HCT116 (cell line): ENCODE measurements at regions of chr19 and their contacts with region 1.

Region 1: GRCh38 chr19:45643024-45643926 is 4.1 kb upstream of the EML2 start:
- DNase-seq: peak; percentile 71
- ATAC-seq: no peak
- H3K4me3 ChIP-seq: peak overlapping the region; percentile 53; a peak in 3 of 4 replicates
- H3K27ac ChIP-seq: peak overlapping the region; percentile 79; the same call in 1 of the 2 replicates
- H3K4me1 ChIP-seq: peaks cover 28 to 68% of the 10 kb centered on the region in 2 experiments
- H3K27me3 ChIP-seq: no peaks in the 10 kb centered on the region
- CTCF ChIP-seq: peak; percentile 97 to 99 (median 99)
- POLR2A ChIP-seq: peak; percentile 21
- RAD21 ChIP-seq: peak; percentile 98

Region 2: DNA sequence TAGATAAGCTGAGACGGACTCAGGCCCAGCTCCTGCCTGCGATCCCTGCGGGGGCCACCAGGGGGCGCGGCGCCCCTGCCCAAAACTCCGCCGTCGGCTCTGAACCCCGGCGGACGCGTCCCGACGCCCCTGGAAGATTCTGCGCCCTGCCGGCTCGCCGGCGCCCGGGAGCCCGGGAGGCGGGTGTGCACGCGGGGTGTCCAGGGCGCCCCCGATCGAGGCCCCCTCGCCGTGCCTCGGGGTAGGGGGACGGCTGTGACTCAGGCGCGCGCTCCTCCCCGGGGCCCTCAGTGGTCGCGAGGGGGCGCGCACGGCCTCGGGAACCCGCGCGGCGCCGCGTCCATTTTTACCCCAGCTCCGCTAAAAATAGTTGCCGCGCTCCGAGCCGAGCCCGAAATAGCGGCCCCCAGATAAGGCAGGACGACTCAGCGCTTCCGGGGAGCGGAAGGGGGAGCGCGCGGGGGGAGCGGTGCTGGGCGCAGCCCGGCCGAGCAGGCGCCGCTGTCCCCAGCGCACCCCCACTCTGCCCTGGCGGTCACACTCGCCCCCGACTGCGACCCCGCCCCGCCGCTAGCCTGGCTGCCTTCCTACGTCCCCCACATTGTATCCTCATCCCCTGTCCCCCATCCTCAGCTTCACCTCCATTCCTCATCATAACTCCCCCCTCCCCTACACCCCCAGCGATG is 203.6 kb before region 1 on chr19:
- CTCF ChIA-PET with region 1: interaction called, 10 read pairs
- POLR2A ChIA-PET with region 1: interaction called, 4 read pairs
- RAD21 ChIA-PET with region 1: interaction called in 1 of 2 experiments, 5 read pairs
- intact Hi-C with region 1: no loop called
- DNase-seq: no peak
- ATAC-seq: peak; percentile 48
- H3K4me3 ChIP-seq: peak overlapping the region; percentile 34 to 63
- H3K27ac ChIP-seq: peak overlapping the region; percentile 81
- H3K4me1 ChIP-seq: peaks cover 23 to 44% of the 10 kb centered on the region in 2 experiments
- H3K27me3 ChIP-seq: no peaks in the 10 kb centered on the region
- CTCF ChIP-seq: peak; percentile 88 to 98 (median 96)
- POLR2A ChIP-seq: no peak
- RAD21 ChIP-seq: peak; percentile 87

Region 3: DNA sequence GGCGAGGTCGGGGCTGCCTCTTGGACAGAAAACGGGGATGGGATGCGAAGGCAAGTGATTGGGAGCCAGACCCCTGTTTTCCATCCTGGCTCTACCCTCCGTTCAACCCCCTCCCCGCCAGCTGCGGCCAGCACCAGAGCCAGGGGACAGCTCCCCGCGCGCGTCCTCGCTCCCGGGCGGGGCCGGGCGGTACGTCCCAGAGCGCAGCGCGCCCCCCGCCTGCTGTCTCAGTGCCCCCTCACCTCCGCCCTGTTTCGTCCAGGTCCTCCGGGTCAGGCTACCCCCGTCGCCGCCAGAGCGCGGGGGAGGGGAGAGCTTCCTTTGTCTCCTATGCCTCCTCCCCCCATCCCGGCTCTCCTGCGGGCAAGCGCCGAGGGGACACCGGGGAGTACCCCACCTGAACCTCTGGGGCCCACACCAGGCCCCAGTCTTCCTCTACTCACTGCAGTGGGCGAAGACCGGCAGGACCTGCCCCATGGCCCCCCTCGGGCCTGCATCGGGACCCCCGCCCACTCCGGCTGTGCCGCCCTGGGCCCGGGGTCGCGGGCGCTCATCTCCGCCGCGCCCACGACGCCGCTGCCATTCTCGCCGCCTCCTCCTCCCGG is 146.8 kb before region 1 on chr19:
- CTCF ChIA-PET with region 1: interaction called, 5 read pairs
- POLR2A ChIA-PET with region 1: interaction called, 5 read pairs
- RAD21 ChIA-PET with region 1: interaction called in 1 of 2 experiments, 3 read pairs
- intact Hi-C with region 1: loop called (anchors 2 kb)
- DNase-seq: no peak
- ATAC-seq: peak; percentile 17
- H3K4me3 ChIP-seq: peak overlapping the region; percentile 53 to 64
- H3K27ac ChIP-seq: peak overlapping the region; percentile 47; the same call in 1 of the 2 replicates
- H3K4me1 ChIP-seq: peaks cover 25 to 53% of the 10 kb centered on the region in 2 experiments
- H3K27me3 ChIP-seq: peaks cover 10% of the 10 kb centered on the region; the same call in 1 of the 2 replicates
- CTCF ChIP-seq: no peak
- POLR2A ChIP-seq: no peak
- RAD21 ChIP-seq: no peak

Region 4: GRCh38 chr19:45584332-45585157 is 58.7 kb before region 1 on chr19 and contains the start of gene OPA3:
- CTCF ChIA-PET with region 1: interaction called, 14 read pairs
- POLR2A ChIA-PET with region 1: interaction called, 5 read pairs
- RAD21 ChIA-PET with region 1: no interaction called
- intact Hi-C with region 1: no loop called
- DNase-seq: peak; percentile 100
- ATAC-seq: peak; percentile 93
- H3K4me3 ChIP-seq: peak within 1 kb of the TSS; percentile 72 to 97
- H3K27ac ChIP-seq: peak within 1 kb of the TSS; percentile 79
- H3K4me1 ChIP-seq: peaks cover 6 to 7% of the 10 kb centered on the region in 2 experiments; a peak in 3 of 4 replicates
- H3K27me3 ChIP-seq: no peaks in the 10 kb centered on the region
- CTCF ChIP-seq: no peak
- POLR2A ChIP-seq: peak; percentile 30
- RAD21 ChIP-seq: no peak
- total RNA-seq, gene OPA3: 11.1 TPM

Region 5: GRCh38 chr19:45615795-45616708 is 27.2 kb before region 1 on chr19:
- CTCF ChIA-PET with region 1: interaction called, 45 read pairs
- POLR2A ChIA-PET with region 1: interaction called, 54 read pairs
- RAD21 ChIA-PET with region 1: interaction called in 1 of 2 experiments, 9 read pairs
- intact Hi-C with region 1: no loop called
- DNase-seq: peak; percentile 97
- ATAC-seq: peak; percentile 88
- H3K4me3 ChIP-seq: peak overlapping the region; percentile 43 to 52
- H3K27ac ChIP-seq: peak overlapping the region; percentile 98
- H3K4me1 ChIP-seq: peaks cover 30 to 38% of the 10 kb centered on the region in 2 experiments
- H3K27me3 ChIP-seq: no peaks in the 10 kb centered on the region
- CTCF ChIP-seq: no peak
- POLR2A ChIP-seq: peak; percentile 66
- RAD21 ChIP-seq: no peak

Region 6: DNA sequence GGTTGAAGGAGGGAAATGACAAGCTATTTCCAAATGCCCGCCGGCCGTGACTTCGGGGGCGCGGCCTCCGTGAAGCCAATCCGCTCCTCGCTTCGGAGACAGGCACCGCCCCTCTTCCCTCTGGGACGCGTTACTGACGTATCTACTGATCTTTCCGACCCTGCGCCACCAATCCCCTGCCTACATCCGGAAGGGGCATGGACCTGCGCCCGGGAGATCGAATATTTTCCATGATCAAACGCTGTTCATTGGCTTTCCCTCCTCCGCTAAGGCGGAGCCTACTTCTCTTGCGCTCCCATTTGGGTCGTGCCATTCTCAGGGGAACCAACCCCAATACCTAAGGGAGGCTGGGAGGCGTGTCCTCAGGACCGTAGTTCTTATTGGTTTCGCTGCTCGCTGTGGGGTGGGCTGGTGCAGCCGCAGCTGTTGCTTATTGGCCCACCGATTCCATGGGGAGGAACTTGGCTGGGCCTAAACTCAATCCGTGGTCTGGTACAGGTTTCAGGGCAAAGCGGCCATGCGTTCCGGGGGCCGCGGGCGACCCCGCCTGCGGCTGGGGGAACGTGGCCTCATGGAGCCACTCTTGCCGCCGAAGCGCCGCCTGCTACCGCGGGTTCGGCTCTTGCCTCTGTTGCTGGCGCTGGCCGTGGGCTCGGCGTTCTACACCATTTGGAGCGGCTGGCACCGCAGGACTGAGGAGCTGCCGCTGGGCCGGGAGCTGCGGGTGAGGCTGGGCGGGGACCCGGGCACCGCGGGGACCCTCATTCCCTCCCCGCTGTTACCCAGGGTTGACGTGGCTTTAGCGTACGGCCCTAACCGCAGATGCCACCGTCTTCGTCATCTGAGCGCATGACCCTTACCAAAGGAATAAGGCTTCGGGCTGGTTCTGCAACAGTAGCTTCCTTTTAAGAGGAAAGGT is 49.2 kb after region 1 on chr19 and contains the start of gene QPCTL:
- CTCF ChIA-PET with region 1: interaction called, 17 read pairs
- POLR2A ChIA-PET with region 1: interaction called, 8 read pairs
- RAD21 ChIA-PET with region 1: no interaction called
- intact Hi-C with region 1: no loop called
- DNase-seq: peak; percentile 99
- ATAC-seq: peak; percentile 91
- H3K4me3 ChIP-seq: peak within 1 kb of the TSS; percentile 86 to 98
- H3K27ac ChIP-seq: peak within 1 kb of the TSS; percentile 79
- H3K4me1 ChIP-seq: peaks cover 3 to 13% of the 10 kb centered on the region in 2 experiments; a peak in 3 of 4 replicates
- H3K27me3 ChIP-seq: no peaks in the 10 kb centered on the region
- CTCF ChIP-seq: no peak
- POLR2A ChIP-seq: peak; percentile 61
- RAD21 ChIP-seq: no peak
- total RNA-seq, gene QPCTL: 19.5 TPM

Region 7: GRCh38 chr19:46133101-46133682 is 489.9 kb after region 1 on chr19:
- CTCF ChIA-PET with region 1: no interaction called
- POLR2A ChIA-PET with region 1: no interaction called
- RAD21 ChIA-PET with region 1: no interaction called
- intact Hi-C with region 1: no loop called
- DNase-seq: peak; percentile 73
- ATAC-seq: peak; percentile 84; the same call in 1 of the 2 replicates
- H3K4me3 ChIP-seq: 0 out of 4 replicates have a peak overlapping the region, but pooled peaks of 1 of the 2 experiments have one; percentile 12
- H3K27ac ChIP-seq: peak overlapping the region; percentile 73
- H3K4me1 ChIP-seq: peaks cover 19 to 29% of the 10 kb centered on the region in 2 experiments
- H3K27me3 ChIP-seq: no peaks in the 10 kb centered on the region
- CTCF ChIP-seq: no peak
- POLR2A ChIP-seq: peak; percentile 78
- RAD21 ChIP-seq: no peak